ENCODE measurements at regions of chr11 and their contacts with region 1.

Region 1: GRCh38 chr11:126431401-126432064 is 76.0 kb downstream of the ST3GAL4 start:
- DNase-seq: peak; percentile 73 to 95 (median 91)
- H3K4me3 ChIP-seq: no peak overlapping the region
- H3K27ac ChIP-seq: peak overlapping the region; percentile 50 to 95 (median 91)
- H3K4me1 ChIP-seq: peaks cover 18 to 34% of the 10 kb centered on the region in 2 donors
- H3K27me3 ChIP-seq: no peaks in the 10 kb centered on the region
- CTCF ChIP-seq: no peak
- POLR2A ChIP-seq: peak in 1 of 2 donors; percentile 19

Region 2: DNA sequence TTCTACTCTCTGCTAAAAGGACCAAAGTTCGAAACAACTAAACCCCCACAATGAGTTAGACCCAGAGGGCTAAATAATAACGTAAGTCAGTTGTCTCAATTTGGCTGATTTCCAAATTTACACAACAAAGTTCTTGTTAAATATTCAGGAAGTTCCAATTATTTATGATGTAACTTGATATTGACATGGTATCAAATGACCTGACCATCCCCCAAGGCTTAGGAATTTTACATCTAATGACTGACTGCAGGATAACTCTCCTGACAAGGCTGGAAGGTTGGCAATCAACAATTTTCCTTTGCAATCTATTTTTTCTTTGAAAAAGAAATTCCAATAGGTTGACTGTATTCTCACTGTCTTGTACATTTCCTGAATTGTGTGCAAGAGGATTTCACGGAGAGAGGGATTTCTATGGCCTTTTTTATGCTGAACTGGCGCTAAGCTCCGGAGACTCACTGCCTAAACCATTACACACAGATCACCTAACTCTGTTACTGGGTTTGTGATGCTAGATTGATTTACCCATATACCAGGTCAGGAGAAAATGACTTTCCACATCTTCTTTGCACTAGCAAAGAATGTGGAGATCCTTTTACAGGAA is 359.3 kb before region 1 on chr11:
- intact Hi-C with region 1: no loop called
- DNase-seq: no peak
- H3K4me3 ChIP-seq: no peak overlapping the region
- H3K27ac ChIP-seq: no peak overlapping the region
- H3K4me1 ChIP-seq: no peaks in the 10 kb centered on the region
- H3K27me3 ChIP-seq: peaks cover 5% of the 10 kb centered on the region
- CTCF ChIP-seq: no peak
- POLR2A ChIP-seq: no peak

Region 3: GRCh38 chr11:126310228-126310991 is 121.1 kb before region 1 on chr11:
- intact Hi-C with region 1: loop called (anchors 10 kb)
- DNase-seq: peak; percentile 74 to 93 (median 85)
- H3K4me3 ChIP-seq: no peak overlapping the region
- H3K27ac ChIP-seq: peak overlapping the region in 1 of 5 donors; percentile 23
- H3K4me1 ChIP-seq: peaks cover 5 to 17% of the 10 kb centered on the region in 2 donors
- H3K27me3 ChIP-seq: no peaks in the 10 kb centered on the region
- CTCF ChIP-seq: peak; percentile 65 to 91 (median 88)
- POLR2A ChIP-seq: no peak

Region 4: GRCh38 chr11:126480410-126481302 is 49.1 kb after region 1 on chr11:
- intact Hi-C with region 1: loop called in 1 of 2 experiments (anchors 5 kb)
- DNase-seq: peak; percentile 80 to 97 (median 91)
- H3K4me3 ChIP-seq: no peak overlapping the region
- H3K27ac ChIP-seq: peak overlapping the region in 2 of 5 donors; percentile 66 to 68
- H3K4me1 ChIP-seq: peaks cover 6% of the 10 kb centered on the region in 2 donors
- H3K27me3 ChIP-seq: no peaks in the 10 kb centered on the region
- CTCF ChIP-seq: peak; percentile 93 to 99 (median 96)
- POLR2A ChIP-seq: peak in 1 of 2 donors; percentile 18

Measured in adrenal gland (tissue), 19 donors.